CD4-positive, alpha-beta T cell (primary cell): ENCODE measurements at regions of chr9 and their contacts with region 1.

Region 1: DNA sequence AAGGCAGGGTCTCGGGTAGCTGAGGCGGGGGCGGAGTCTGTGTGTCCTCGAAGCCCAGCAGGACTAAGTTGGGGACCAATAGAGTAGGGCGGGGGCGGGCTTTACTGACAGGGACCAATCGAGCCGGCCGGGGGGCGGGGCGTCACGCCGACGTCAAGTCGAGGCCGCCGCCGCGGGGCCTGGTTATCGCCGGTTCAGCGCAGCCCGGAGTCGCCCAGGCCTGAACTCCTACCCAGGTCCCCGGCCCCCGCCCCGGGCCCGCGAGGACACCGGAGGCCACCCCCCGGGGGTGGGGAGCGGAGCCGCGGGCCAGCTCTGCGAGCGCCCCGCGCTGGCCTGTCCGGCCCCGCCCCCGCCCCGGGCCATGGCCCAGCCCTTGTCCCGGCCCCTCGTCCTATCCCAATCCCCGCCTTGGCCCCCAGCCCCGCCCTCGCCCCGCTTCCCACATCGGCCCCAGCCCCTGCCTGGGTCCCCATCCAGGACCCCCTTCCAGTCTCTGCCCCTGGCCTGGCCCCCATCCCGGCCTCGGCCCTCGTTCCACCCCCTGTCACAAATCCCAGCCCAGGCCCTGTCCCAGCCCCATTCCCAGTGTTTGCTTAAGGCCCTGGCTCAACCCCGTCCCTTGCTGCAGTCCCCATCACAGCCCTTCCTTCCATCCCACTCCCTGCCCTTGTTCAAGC is at the start of gene TMEM8B:
- DNase-seq: peak; percentile 89 to 98 (median 94)
- ATAC-seq: peak; percentile 94
- H3K4me3 ChIP-seq: peak within 1 kb of the TSS; percentile 92
- H3K4me3 Mint-ChIP-seq: peak within 1 kb of the TSS; percentile 97
- H3K27ac ChIP-seq: peak within 1 kb of the TSS; percentile 44 to 47
- H3K27ac Mint-ChIP-seq: peak within 1 kb of the TSS; percentile 83
- H3K4me1 ChIP-seq: peaks cover 35% of the 10 kb centered on the region
- H3K4me1 Mint-ChIP-seq: peaks cover 40% of the 10 kb centered on the region
- H3K27me3 ChIP-seq: no peaks in the 10 kb centered on the region
- H3K27me3 Mint-ChIP-seq: no peaks in the 10 kb centered on the region
- CTCF ChIP-seq: no peak
- total RNA-seq, gene TMEM8B: 8.9 to 9.6 TPM

Region 2: DNA sequence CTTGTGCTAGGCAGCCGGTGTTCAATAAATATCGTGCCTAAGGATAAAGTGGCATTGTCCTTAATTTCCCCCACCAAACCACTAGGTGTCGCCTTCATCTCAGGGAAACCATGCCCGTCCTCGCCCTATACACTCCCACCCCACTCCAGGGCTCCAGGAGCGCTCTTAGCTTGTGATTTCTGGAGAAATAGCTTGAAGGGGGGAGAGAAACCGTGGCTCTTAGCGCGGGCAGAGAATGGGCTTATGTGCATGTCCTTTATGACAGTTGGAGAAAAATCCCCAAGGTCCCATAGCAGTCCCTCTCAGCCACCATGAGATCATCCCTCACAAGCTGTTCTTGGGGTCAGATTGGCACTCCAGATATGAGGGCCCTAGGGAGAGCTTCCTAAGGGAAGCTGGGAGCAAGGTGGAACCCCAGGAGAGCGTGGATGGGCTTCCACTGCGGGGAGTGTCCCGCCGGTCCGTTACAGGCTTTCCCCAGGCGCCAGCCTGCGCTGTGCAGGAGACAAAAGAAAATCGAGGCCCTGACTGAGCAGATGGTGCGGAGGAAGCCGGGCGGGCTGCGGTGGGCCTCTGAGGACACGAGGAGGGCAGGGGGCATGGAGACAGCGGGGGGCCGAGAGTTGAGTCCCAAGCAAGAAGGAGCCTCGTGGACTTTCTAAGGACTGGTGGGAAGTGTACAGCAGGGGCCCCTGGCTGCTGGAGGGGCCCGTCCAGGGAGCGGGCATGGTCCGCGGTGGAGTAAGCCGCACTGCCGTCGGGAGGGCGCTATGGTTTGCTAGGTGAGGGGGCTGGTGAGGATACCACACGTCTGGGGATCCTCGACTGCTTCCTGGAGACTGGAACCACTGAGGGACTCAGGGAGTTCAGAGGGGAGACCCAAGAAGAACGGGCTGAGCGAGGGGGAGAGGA is 38.6 kb before region 1 on chr9:
- CTCF ChIA-PET with region 1: interaction called, 7 read pairs
- POLR2A ChIA-PET with region 1: no interaction called
- intact Hi-C with region 1: loop called (anchors 1 kb)
- DNase-seq: peak; percentile 32 to 84 (median 44)
- ATAC-seq: peak; percentile 97
- H3K4me3 ChIP-seq: no peak overlapping the region
- H3K4me3 Mint-ChIP-seq: no peak overlapping the region
- H3K27ac ChIP-seq: no peak overlapping the region
- H3K27ac Mint-ChIP-seq: no peak overlapping the region
- H3K4me1 ChIP-seq: peaks cover 5% of the 10 kb centered on the region
- H3K4me1 Mint-ChIP-seq: peaks cover 7% of the 10 kb centered on the region
- H3K27me3 ChIP-seq: no peaks in the 10 kb centered on the region
- H3K27me3 Mint-ChIP-seq: no peaks in the 10 kb centered on the region
- CTCF ChIP-seq: peak; percentile 89

Region 3: DNA sequence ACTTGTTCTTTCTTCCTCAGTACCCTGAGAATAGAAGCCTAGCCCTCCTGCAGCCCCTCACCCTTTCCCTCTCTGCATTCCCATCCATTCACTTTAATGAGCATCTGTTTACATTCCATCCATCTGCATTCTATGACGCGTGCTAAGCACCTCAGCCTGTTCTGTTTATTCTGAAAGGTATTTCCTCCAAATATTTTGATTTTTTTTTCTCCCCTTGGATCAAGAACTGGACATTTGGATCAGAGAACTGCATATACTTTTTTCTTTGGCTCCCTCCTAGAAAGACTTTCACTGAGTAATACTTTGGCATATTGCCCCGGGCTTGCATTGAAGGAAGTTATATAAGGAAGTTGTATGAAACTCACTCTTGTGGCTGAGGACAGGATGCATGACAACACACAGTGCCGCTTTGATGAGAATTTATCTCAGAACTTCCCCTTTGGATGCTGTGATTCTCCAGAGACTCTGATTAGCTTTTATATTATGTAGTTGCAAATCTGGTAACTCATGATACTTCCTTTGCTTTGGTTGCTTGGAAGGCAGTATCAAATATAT is 15.6 kb after region 1 on chr9:
- CTCF ChIA-PET with region 1: interaction called, 5 read pairs
- POLR2A ChIA-PET with region 1: interaction called, 5 read pairs
- intact Hi-C with region 1: loop called in 1 of 2 experiments (anchors 2 kb)
- DNase-seq: peak in 8 of 14 experiments; percentile 17 to 80 (median 56)
- ATAC-seq: peak; percentile 99
- H3K4me3 ChIP-seq: no peak overlapping the region
- H3K4me3 Mint-ChIP-seq: no peak overlapping the region
- H3K27ac ChIP-seq: peak overlapping the region; percentile 25 to 56
- H3K27ac Mint-ChIP-seq: peak overlapping the region; percentile 25
- H3K4me1 ChIP-seq: peaks cover 26% of the 10 kb centered on the region
- H3K4me1 Mint-ChIP-seq: peaks cover 22% of the 10 kb centered on the region
- H3K27me3 ChIP-seq: no peaks in the 10 kb centered on the region
- H3K27me3 Mint-ChIP-seq: no peaks in the 10 kb centered on the region
- CTCF ChIP-seq: no peak